Psoas muscle (tissue), 8 donors: ENCODE measurements at regions of chr6 and their contacts with region 1.

Region 1: DNA sequence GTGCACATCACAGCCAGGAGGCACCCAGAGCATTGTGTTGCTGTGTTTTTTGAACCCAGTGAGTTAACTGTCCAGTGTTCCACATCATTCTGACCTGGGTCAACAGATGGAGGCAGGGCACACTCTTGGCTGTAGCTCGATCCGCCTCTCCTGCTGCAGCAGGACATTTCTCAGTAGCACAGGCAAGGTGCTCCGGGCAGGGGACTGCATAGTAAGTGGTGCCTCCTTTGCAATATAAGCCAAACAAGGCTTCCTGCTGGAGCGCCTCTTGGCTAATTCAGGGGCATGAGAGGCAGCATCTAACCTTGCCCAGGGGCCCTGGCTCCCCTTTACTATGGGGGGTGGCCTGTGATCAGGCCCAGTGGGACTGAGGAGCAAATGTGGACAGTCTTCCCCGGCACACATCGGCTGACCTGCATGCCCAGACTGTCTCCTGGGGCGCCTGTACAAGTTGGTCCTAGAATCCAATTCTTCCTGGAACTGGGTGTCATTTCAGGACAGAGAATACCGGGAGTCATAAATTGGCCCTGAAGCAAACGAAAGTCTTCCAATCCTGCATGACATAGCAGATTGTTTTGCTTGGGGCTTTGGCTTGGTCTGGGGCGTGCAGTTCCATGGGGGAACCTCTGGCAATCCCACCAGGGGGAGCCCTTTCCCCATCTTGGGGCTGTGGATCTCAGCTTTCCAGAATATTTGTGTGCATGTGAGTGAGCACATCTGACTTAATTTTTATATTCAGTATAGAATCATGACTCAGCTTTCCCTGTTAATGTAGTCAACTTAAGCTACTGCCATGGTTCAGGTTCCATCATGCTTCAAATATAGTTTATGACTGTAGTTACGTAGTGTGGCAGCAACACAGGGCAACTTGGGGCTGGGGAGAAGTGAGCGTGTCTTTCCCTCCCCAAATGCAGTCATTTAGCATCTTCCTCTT is 56.0 kb upstream of the DDR1 start:
- DNase-seq: peak; percentile 87 to 96
- ATAC-seq: peak; percentile 84 to 89 (median 89)
- H3K4me3 ChIP-seq: peak overlapping the region; percentile 37
- H3K27ac ChIP-seq: peak overlapping the region; percentile 95
- H3K4me1 ChIP-seq: peaks cover 34% of the 10 kb centered on the region
- H3K27me3 ChIP-seq: no peaks in the 10 kb centered on the region
- CTCF ChIP-seq: peak; percentile 96

Region 2: GRCh38 chr6:30877419-30878371 is 49.4 kb after region 1 on chr6:
- intact Hi-C with region 1: loop called (anchors 2 kb)
- DNase-seq: peak; percentile 89 to 93
- ATAC-seq: peak; percentile 85 to 91 (median 87)
- H3K4me3 ChIP-seq: peak overlapping the region; percentile 53
- H3K27ac ChIP-seq: peak overlapping the region; percentile 89
- H3K4me1 ChIP-seq: peaks cover 35% of the 10 kb centered on the region
- H3K27me3 ChIP-seq: no peaks in the 10 kb centered on the region
- CTCF ChIP-seq: peak; percentile 81

Region 3: GRCh38 chr6:31079656-31080261 is 251.5 kb after region 1 on chr6:
- intact Hi-C with region 1: loop called in 1 of 2 experiments (anchors 5 kb)
- DNase-seq: peak; percentile 46 to 70
- ATAC-seq: peak; percentile 61 to 84 (median 64)
- H3K4me3 ChIP-seq: peak overlapping the region; percentile 21
- H3K27ac ChIP-seq: no peak overlapping the region
- H3K4me1 ChIP-seq: peaks cover 10% of the 10 kb centered on the region
- H3K27me3 ChIP-seq: no peaks in the 10 kb centered on the region
- CTCF ChIP-seq: peak; percentile 78

Region 4: DNA sequence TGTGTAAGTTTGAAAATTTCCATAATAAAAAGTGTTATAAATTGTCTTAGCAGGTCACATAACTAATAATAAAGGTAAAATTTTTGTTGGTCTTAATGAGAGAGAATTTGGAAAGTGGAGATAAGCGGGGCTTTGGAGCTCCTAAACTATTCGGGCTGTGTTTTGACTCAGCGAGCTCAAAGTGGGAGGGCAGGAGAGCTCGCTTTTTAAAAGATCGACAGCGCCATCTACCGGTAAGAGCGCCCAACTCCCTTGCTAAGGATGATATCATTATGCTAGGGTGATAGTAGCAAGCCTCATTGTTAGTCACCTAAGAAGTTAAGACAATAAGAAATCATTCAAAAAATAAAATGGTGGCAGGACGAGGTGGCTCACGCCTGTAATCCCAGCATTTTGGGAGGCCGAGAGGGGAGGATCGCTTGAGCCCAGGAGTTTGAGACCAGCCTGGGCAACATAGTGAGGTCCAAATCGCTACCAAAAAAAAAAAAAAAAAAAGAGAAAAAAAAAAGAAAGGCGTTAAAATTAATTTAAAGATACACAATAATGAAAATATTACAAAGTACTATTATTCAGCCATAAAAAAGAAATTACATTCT is 259.3 kb after region 1 on chr6:
- intact Hi-C with region 1: loop called (anchors 5 kb)
- DNase-seq: peak; percentile 81 to 85
- ATAC-seq: peak; percentile 89 to 97 (median 94)
- H3K4me3 ChIP-seq: no peak overlapping the region
- H3K27ac ChIP-seq: peak overlapping the region; percentile 31
- H3K4me1 ChIP-seq: peaks cover 17% of the 10 kb centered on the region
- H3K27me3 ChIP-seq: no peaks in the 10 kb centered on the region
- CTCF ChIP-seq: peak; percentile 86